GM10248 (cell line): ENCODE measurements at regions of chr10 and their contacts with region 1.

Region 1: DNA sequence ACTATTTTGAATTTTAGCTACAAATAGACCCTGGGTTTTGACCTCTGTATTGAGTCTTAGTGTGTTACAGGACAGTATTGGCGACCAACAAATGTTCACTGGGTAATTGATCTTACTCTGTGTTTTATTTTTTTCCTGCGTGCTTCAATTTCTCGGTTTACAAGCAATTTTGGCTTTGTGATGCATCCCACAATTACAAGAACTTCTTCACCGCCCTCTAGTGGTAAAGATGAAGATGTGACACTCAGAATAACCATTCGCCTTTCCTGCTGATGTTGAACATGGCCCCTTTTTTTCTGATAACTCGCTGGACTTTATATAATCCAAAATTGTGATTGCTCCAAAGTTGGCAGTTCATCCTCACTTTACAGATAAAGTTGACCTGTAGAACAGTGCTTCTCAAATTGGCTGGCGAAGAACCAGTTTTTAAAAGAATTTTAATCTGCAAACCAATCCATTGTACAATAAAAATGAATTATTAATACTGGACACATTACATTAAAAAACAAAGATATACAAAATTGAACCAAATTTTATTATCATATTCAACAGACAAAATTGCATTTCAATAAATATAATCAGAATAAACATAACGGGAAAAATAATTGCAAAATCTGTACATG is 20.2 kb upstream of the SMC3 start:
- DNase-seq: peak; percentile 72
- CTCF ChIP-seq: peak; percentile 73

Region 2: DNA sequence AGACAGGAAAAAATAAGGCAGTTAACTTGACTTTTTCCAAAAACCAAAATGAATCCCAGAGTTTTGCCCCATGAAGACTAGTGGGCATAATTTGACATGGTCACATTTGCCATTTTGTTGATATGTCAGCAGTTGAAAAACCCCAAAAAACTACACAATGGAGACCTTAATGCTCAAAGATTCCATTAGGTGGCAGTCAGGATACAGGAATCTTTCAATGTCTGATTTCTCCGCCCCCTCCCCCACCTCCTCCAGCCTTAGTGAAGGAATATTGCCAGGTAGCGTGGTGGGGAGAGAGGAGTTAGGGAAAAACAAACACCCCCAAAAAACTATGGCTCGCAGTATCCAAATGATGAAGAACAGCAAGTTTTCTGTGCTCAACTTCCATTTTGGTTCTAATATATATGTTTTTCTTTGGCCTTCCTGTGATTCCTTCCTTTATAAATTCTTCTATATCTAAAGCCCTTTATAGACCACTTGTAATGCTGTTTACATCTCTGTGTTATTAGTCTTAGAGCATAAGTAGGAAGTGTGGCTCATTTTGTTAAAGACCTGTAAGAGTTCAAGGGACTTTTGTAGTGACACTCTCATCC is 235.8 kb before region 1 on chr10:
- CTCF ChIA-PET with region 1: interaction called, 86 read pairs
- POLR2A ChIA-PET with region 1: no interaction called
- DNase-seq: peak; percentile 41
- CTCF ChIP-seq: peak; percentile 60

Region 3: DNA sequence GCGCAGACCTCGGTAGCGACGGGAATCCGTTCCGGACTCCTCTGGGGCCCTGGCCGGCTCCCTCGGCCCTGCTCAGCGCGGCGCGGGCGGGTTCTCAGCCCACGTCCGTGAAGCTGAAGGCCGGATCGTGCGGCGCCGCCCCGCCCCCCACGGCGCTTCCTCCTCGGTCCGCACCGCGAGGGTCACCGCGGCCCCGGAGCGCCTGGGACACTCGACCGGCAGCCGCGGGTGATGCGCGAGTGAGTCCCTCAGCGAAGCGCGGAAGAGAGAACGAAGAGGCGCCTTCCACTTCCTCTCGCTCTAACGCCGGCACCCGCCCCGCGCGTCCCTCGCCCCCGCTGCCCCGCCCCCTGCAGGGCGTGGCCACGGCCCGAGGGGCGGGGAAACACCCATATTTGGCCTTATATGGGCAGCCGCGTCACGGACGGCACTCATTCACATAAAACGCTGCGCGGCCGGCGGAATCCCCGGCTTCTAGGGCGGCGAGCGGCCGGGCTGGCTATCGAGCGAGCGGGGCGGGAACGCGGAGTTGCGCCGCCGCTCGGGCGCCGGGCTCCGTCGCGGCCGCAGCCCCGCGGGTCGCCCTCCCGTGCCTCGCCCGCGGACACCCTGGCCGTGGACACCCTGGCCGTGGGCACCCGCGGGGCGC is 49.7 kb before region 1 on chr10 and contains the start of gene DUSP5:
- CTCF ChIA-PET with region 1: interaction called, 24 read pairs
- POLR2A ChIA-PET with region 1: no interaction called
- DNase-seq: peak; percentile 96
- CTCF ChIP-seq: no peak

Region 4: GRCh38 chr10:110563132-110563531 is 15.9 kb after region 1 on chr10:
- CTCF ChIA-PET with region 1: interaction called, 37 read pairs
- POLR2A ChIA-PET with region 1: no interaction called
- DNase-seq: no peak
- CTCF ChIP-seq: no peak